Gastrocnemius medialis (tissue), 4 donors: ENCODE measurements at regions of chr19 and their contacts with region 1.

Region 1: GRCh38 chr19:18488838-18489626 is 32.8 kb downstream of the ELL start:
- DNase-seq: peak in 1 of 2 donors; percentile 69
- ATAC-seq: peak; percentile 59 to 61
- H3K4me3 ChIP-seq: no peak overlapping the region
- H3K27ac ChIP-seq: peak overlapping the region; percentile 71 to 86 (median 80)
- H3K4me1 ChIP-seq: peaks cover 83 to 87% of the 10 kb centered on the region in 2 donors
- H3K27me3 ChIP-seq: no peaks in the 10 kb centered on the region
- CTCF ChIP-seq: peak in 3 of 5 experiments; percentile 27 to 54 (median 28)
- POLR2A ChIP-seq: no peak

Region 2: DNA sequence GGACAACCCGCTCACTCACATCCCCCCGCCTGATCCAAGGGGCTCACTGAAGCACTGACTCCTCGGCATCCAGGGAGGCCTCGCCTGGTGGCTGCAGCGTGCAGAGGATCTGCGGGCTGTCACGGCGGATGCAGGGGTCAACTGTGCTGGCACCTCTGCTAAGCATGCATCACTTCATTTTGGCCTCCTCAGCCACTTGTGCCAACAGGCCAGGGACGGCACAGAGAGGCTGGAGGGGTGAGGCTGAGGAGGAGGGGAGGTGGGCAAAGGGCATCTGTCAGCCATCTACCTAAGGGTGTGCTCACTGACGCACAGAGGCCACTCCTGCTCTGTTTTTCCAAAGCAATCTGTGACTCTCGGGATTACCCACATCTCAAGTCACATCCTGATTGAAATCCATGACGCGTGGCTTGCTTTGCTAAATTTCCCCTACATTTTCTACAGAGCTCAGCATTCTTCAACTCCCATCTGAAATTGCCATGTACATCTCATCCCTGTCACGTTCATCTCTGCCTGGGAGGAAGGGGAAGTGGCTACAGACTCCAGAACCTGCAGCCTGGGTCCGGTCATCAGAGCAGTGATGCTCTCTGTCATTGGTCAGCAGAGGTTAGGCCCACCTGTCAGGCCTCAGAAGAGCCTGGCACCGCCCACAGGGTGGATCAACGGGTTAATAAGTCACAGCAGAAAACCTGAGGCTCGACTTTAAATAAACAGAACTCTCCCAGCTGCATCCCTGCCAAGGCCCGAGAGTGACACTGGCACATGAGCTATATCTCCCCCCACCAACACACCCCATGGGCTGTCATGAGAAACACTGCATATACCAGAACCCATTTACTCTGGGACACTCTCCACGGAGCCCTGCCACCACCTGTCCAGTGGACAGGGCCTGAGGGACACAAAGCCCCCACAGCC is 15.2 kb after region 1 on chr19:
- in situ Hi-C with region 1: no loop called
- intact Hi-C with region 1: loop called (anchors 2 kb)
- DNase-seq: no peak
- ATAC-seq: no peak
- H3K4me3 ChIP-seq: no peak overlapping the region
- H3K27ac ChIP-seq: peak overlapping the region; percentile 94 to 99 (median 98)
- H3K4me1 ChIP-seq: peaks cover 100% of the 10 kb centered on the region in 2 donors
- H3K27me3 ChIP-seq: no peaks in the 10 kb centered on the region
- CTCF ChIP-seq: no peak
- POLR2A ChIP-seq: no peak

Region 3: DNA sequence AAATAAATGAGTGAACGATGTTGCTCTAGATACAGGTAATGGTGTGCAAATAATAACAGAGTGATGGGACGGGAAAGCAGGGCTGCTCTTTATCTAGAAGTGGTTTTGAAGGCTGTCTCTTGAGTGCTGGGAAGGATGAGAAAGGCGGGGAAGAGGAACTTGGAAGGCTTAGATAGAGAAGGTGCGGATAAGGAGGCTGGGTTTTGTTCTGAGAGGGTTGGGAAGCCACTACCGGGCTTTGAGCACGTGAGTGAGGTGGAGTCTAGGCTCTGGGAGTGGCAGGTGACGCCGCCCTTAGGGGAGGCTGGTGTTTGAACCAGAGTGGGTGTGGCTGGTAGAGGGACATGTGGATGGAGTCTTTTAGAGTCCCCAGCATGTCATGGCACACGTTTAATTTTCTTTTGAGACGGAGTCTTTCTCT is 545.2 kb after region 1 on chr19:
- in situ Hi-C with region 1: no loop called
- intact Hi-C with region 1: no loop called
- DNase-seq: peak in 1 of 2 donors; percentile 50
- ATAC-seq: peak in 1 of 2 donors; percentile 22
- H3K4me3 ChIP-seq: peak overlapping the region; percentile 69 to 96 (median 73)
- H3K27ac ChIP-seq: peak overlapping the region; percentile 89 to 100 (median 94)
- H3K4me1 ChIP-seq: peaks cover 22 to 40% of the 10 kb centered on the region in 2 donors
- H3K27me3 ChIP-seq: no peaks in the 10 kb centered on the region
- CTCF ChIP-seq: no peak
- POLR2A ChIP-seq: no peak